ENCODE measurements at regions of chr4 and their contacts with region 1.

Region 1: GRCh38 chr4:127732613-127733328 is 2.6 kb downstream of the SLC25A31 start:
- DNase-seq: no peak
- H3K4me3 Mint-ChIP-seq: no peak overlapping the region
- H3K27ac Mint-ChIP-seq: no peak overlapping the region
- H3K4me1 Mint-ChIP-seq: no peaks in the 10 kb centered on the region
- H3K27me3 Mint-ChIP-seq: peaks cover 1% of the 10 kb centered on the region

Region 2: DNA sequence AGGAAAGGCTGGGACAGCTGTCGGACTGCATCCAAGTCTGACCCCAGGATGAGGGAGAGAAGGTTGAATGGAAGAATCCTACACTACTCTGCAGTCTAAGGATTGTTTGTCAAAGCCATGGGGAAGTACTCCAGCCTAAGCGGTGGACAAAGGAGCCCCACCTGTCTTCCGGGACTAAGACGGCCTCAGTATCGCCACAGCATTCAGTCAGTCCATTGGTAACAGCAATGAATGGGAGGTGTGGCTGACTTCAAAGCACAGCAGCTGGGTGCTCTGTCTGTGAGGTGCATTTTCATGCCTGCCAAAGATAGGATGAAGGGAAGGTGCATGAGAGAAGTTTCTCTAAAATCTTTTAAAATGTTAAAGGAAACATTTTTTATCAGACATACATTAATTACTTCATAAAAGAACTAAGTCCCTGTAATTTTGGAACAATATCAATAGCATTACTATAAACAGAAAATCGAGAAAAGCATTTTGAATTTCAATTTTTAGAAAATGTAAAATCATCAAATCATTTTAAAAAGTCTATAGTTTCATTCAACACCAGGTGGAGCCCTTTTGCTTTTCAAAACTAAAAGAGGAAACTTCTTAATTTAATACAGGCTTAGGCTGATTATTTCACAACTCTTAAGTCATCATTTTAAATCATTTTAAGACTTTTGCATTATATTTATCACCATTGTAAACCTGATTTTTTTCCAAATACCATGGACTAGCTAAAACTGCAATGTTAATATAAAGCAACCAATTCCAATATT is 127.6 kb before region 1 on chr4:
- intact Hi-C with region 1: loop called (anchors 1 kb)
- DNase-seq: no peak
- H3K4me3 Mint-ChIP-seq: no peak overlapping the region
- H3K27ac Mint-ChIP-seq: no peak overlapping the region
- H3K4me1 Mint-ChIP-seq: no peaks in the 10 kb centered on the region
- H3K27me3 Mint-ChIP-seq: peaks cover 11% of the 10 kb centered on the region